GM10248 (cell line): ENCODE measurements at regions of chr17 and their contacts with region 1.

Region 1: GRCh38 chr17:76005263-76006149 is 4.9 kb downstream of the CDK3 start:
- DNase-seq: peak; percentile 87
- CTCF ChIP-seq: peak; percentile 68

Region 2: DNA sequence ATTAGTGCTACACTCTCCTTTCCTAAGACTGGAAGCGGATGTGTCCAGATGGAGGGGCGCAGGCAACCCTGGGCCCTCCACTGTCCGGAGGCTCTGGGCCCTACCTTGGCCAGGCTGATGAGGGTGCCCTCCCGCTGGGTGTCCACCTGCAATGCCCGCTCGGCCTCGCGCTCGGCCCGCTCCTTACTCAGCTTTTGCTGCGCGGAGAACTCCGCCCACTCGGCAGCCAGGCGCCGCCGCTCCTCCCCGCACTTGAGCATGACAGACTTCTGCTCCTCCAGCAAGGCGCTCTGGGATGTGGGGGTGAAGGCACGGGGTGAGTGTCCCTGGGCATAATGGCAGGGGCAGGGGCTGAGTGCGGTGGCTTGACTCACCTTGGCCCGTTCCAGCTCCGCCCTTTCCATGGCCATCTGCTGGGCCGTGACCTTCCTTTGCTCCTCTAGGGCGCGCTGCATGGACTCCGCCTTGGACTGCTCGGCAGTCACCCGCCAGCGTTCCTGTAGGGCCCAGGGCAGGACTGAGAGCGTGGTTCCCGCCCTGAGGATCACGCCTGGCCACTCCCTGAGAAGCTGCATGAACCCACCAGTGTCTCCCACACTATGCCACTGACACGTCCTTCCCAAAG is 90.8 kb before region 1 on chr17:
- CTCF ChIA-PET with region 1: interaction called, 239 read pairs
- POLR2A ChIA-PET with region 1: interaction called, 3 read pairs
- DNase-seq: no peak
- CTCF ChIP-seq: no peak

Region 3: DNA sequence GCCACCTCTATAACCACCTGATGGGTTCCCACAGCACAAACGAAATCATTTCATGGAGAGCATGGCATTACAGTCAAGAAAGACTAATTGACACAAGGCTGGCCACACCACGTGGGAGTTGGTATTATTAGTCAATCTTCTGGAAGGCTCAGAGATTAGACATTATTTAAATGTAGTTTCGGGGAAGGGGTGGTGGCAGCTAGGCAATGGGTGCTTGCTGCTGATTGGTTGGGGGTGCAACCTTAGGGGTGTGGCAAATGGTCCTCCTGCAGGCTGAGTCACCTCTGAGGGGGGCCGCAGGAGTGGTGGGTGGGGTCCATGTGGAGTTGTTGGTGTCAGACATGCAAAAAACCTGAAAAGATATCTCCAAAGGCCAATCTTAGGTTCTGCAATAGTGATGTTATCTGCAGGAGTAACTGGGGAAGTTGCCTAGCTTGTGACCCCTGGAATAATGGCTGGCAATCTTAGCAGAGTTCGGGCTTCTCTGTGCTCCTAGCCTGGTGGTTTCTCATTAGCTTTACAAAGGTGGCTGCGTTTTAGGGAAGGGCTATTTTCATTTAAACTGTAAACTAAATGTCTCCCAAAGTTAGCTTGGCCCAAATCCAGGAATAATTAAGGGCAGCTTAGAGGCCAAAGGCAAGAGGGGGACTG is 21.9 kb before region 1 on chr17:
- CTCF ChIA-PET with region 1: interaction called, 25 read pairs
- POLR2A ChIA-PET with region 1: interaction called, 4 read pairs
- DNase-seq: no peak
- CTCF ChIP-seq: no peak

Region 4: GRCh38 chr17:75991401-75991800 is 14.1 kb before region 1 on chr17:
- CTCF ChIA-PET with region 1: interaction called, 266 read pairs
- POLR2A ChIA-PET with region 1: interaction called, 3 read pairs
- DNase-seq: no peak
- CTCF ChIP-seq: no peak